ENCODE measurements at regions of chr1 and their contacts with region 1.

Region 1: DNA sequence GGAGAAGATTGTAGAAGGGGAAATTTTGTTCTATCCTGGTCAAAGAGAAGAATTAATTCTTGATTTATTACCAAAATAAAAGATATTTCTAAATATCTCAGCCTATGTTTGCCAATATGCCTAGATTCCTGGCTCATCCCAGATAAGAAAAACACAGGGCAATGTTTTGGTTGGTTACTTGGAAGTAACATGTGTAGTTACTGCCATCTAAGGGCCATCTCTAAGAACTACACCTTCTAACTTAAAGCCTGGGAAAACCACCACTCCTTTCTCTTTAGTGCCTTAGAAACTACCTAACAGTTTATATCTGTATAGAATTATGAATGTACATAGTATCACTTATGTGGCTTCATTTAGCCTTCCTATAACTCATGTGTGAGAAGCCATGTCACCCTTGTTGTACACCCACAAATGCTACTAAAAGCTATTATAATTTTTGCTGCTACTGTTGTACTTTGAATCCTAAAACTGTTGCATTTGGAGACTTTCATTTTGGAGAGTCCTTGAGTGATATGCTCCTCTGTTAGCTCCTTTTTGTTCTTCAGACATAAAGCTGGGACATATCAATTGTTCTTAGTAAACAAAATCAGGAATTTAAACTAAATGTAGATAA is 4.5 kb downstream of the AIM2 start:
- DNase-seq: no peak

Region 2: GRCh38 chr1:158203693-158204457 is 868.2 kb before region 1 on chr1:
- intact Hi-C with region 1: loop called (anchors 5 kb)
- DNase-seq: no peak

Region 3: DNA sequence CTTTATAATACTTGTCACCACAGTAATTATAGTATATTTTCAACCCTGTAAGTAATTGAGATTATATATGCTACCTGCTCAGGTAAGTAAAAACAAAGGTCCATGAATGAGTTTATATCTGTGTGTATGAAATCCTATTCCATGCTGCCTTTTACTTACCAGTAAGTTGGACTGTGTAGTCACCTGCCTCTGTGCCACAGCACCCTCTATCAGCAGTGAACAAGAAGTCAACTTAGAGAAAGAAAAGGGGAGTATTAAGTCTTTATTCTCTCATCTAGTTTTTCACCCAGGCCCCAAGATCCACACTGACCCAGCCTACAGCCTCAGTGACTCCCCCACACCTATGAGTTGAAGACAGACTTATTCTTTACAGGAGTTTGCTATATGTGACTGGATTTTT is 99.2 kb before region 1 on chr1:
- intact Hi-C with region 1: no loop called
- DNase-seq: no peak

Region 4: GRCh38 chr1:159015440-159015909 is 56.6 kb before region 1 on chr1:
- intact Hi-C with region 1: loop called (anchors 5 kb)
- DNase-seq: peak; percentile 83

Region 5: DNA sequence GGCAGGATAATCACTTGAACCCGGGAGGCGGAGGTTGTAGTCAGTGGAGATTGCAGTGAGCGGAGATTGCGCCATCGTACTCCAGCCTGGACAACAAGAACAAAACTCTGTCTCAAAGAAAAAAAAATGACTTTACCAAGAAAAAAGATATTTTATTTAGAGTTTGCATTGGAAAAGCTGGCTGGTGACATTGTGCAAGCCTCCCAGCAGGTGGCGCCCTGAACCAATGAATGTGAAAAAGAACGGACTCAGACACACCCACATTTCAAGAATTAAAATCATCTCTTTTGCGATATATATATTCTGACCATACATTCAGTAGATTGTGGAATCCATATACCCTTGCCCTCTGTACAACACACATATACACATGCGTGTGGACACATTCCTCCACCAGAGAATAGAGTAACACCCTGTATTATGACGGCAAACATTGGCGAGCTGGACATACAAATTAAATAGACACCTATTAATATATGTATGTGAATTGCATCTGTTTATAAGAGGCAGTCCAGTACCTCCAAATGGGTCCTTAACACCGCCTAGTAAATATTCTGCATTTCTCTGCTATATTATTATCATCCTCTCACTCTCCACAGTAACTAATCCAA is 60.3 kb after region 1 on chr1:
- intact Hi-C with region 1: no loop called
- DNase-seq: peak; percentile 80